ENCODE measurements at regions of chr1 and their contacts with region 1.

Region 1: GRCh38 chr1:13662493-13662892 is 37.5 kb upstream of the PRDM2 start:
- DNase-seq: no peak
- ATAC-seq: no peak
- H3K4me3 ChIP-seq: no peak overlapping the region
- H3K27ac ChIP-seq: peak overlapping the region in 1 of 12 donors; percentile 4
- H3K4me1 ChIP-seq: peaks cover 0 to 7% (median 0%) of the 10 kb centered on the region in 12 donors
- H3K27me3 ChIP-seq: peaks cover 0 to 6% (median 0%) of the 10 kb centered on the region in 9 donors
- CTCF ChIP-seq: no peak
- POLR2A ChIP-seq: no peak

Region 2: GRCh38 chr1:13725714-13726175 is 63.3 kb after region 1 on chr1:
- intact Hi-C with region 1: loop called in 1 of 10 experiments (anchors 10 kb)
- DNase-seq: no peak
- ATAC-seq: peak in 1 of 4 donors; percentile 52
- H3K4me3 ChIP-seq: no peak overlapping the region
- H3K27ac ChIP-seq: no peak overlapping the region
- H3K4me1 ChIP-seq: peaks cover 0 to 22% (median 0%) of the 10 kb centered on the region in 12 donors
- H3K27me3 ChIP-seq: no peaks in the 10 kb centered on the region
- CTCF ChIP-seq: peak in 7 of 12 donors; percentile 13 to 41 (median 31)
- POLR2A ChIP-seq: no peak

Region 3: DNA sequence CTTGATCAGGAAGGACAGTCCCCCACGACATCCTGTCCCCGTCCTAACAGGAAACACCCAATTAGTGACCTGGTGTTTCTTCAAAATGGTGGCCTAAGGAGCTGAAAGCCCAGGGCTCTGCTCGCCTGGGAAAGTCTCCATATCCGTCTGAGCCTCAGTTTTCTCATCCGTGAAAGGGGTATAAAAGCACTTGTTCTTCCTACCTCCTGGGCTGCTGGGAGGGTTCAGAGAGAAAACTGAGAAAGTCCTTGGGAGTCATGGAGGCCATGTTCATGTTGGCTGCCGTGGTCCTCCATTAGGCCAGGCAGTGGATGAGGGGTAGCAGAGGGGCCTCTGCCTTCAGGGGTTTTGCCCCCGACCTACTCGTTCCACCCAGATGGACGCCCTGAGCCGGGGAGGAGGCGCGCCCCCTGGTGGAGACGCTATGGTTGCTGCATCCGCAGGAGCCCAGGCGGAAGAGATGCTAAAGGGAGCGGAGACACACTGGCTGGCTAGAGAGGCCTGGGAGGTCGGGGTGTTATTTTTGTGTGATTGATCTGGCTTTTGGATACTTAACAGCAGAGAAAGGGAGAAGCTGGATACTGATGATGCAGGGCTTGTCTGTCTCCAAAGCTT is 151.0 kb after region 1 on chr1:
- intact Hi-C with region 1: loop called in 7 of 10 experiments (anchors 5 to 10 kb)
- DNase-seq: peak in 2 of 5 donors; percentile 50 to 79
- ATAC-seq: peak in 1 of 4 donors; percentile 30
- H3K4me3 ChIP-seq: no peak overlapping the region
- H3K27ac ChIP-seq: no peak overlapping the region
- H3K4me1 ChIP-seq: peaks cover 0 to 12% (median 1%) of the 10 kb centered on the region in 12 donors
- H3K27me3 ChIP-seq: no peaks in the 10 kb centered on the region
- CTCF ChIP-seq: peak in 11 of 12 donors; percentile 15 to 69 (median 51)
- POLR2A ChIP-seq: no peak

Region 4: DNA sequence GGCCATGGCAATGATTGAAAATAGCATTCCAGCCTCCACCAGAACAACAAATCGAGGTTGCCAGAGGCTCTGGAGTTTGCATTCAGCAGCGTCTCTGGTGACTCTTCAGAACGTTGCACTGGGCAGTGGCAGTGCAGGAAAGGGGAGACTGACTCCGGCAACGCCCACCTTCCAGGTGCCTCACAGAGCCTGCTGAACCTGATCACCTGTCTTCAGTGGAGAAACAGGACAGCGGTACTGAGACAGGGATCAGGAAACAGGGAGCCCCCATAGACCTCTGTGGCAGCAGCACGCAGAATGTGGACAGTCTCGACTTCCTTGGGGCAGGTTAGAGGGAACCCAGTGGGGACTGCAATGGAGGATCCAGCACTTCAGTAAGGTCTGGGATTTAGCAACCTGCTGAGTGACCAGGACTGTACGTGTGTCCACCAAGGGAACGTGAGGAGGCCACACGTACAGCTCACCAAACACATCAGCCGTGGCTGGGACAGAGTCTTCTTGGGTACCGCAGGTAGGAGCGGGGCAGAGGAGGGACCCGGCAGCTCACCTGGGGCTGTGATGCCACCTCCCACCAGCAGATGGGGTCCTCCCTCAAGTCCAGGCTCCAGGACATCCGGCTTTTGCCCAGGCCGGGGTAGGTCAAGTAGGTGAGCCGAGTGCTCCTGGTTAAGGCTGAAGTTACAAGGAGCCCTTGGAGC is 166.1 kb after region 1 on chr1:
- intact Hi-C with region 1: loop called in 2 of 10 experiments (anchors 10 kb)
- DNase-seq: no peak
- ATAC-seq: peak in 2 of 4 donors; percentile 24 to 49
- H3K4me3 ChIP-seq: no peak overlapping the region
- H3K27ac ChIP-seq: no peak overlapping the region
- H3K4me1 ChIP-seq: peaks cover 0 to 3% (median 0%) of the 10 kb centered on the region in 12 donors
- H3K27me3 ChIP-seq: peaks cover 0 to 19% (median 0%) of the 10 kb centered on the region in 9 donors
- CTCF ChIP-seq: peak in 10 of 12 donors; percentile 18 to 53 (median 40)
- POLR2A ChIP-seq: no peak

Region 5: DNA sequence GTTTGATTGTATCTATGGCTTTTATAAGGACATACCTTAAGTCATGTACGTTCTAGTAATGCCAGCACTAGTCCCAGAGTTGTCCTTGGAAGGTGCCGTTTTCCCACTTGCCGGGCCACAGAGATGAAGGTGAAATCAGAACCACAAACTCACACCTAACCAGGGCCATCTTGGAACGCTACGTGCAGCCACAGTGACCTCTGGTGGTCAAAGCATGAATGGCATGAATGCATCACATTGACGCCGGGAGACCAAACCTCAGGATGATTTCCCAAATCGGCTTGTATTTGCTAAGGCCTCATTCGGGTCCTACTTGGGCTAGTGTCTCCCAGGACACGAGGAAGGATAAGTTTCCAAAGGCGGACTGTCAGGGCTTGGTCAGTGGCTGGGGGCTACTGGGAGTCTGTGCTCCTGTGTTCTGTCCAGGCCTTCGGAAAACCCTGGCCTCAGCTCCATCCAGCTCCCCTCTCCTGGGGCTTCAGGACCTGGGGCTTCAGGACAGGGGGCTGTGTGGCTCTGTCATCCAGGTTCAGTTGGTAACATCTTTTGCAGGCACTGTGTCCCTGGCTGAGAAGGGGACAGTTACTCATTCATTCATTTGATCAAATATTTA is 298.0 kb after region 1 on chr1:
- intact Hi-C with region 1: loop called (anchors 1 to 2 kb)
- DNase-seq: peak; percentile 36 to 74 (median 60)
- ATAC-seq: peak in 3 of 4 donors; percentile 66 to 83 (median 77)
- H3K4me3 ChIP-seq: no peak overlapping the region
- H3K27ac ChIP-seq: no peak overlapping the region
- H3K4me1 ChIP-seq: no peaks in the 10 kb centered on the region
- H3K27me3 ChIP-seq: peaks cover 0 to 30% (median under 1%) of the 10 kb centered on the region in 9 donors
- CTCF ChIP-seq: peak; percentile 91 to 99 (median 96)
- POLR2A ChIP-seq: no peak